ENCODE measurements at regions of chr10 and their contacts with region 1.

Region 1: GRCh38 chr10:22874189-22874854 is 53.5 kb upstream of the ARMC3 start:
- DNase-seq: no peak
- H3K4me3 ChIP-seq: no peak overlapping the region
- CTCF ChIP-seq: no peak

Region 2: DNA sequence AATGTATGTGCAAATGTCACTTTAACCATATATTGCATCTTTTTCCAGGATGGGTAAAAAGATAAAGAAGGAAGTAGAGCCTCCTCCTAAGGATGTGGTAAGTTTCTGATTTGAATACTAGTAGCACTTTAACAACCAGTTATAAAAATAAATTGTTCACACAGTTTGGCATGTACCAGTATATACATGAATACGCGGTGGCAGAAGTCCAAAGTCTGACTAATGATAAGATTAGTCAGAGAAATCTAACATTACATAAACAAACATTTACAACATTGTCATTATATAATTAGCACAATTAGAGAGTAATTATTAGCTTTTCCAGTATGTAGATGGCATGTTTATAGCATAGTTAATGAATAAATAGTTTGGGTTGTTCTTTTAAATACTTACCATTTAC is 57.6 kb after region 1 on chr10:
- in situ Hi-C with region 1: loop called (anchors 10 kb)
- DNase-seq: peak; percentile 32
- H3K4me3 ChIP-seq: no peak overlapping the region
- CTCF ChIP-seq: no peak